HEK293T (cell line): ENCODE measurements at regions of chr10 and their contacts with region 1.

Region 1: DNA sequence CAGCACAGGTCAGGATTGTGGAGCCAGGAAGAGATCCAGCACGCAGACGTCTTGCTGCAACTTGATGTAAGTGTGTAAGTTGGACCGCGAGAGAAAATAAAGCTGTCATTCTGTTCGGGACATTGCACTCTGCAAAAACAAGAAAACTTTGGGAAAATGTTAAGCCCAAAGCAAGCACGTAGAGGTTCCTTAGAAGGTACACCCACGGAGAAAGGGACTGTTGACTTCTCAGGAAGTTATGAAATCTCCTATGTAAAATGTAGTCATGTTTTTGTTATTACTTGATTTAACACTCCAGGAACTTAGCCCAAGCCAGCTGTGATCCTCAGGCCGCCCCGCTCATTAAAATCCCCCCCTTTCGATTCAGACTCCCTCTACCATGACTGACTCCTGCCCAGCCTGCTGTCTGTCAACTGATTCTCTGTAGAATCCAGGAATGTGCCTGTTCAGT is 196.1 kb upstream of the TCF7L2 start:
- DNase-seq: no peak

Region 2: GRCh38 chr10:111944331-111944730 is 809.7 kb before region 1 on chr10:
- CTCF ChIA-PET with region 1: no interaction called
- POLR2A ChIA-PET with region 1: no interaction called
- DNase-seq: peak; percentile 18

Region 3: DNA sequence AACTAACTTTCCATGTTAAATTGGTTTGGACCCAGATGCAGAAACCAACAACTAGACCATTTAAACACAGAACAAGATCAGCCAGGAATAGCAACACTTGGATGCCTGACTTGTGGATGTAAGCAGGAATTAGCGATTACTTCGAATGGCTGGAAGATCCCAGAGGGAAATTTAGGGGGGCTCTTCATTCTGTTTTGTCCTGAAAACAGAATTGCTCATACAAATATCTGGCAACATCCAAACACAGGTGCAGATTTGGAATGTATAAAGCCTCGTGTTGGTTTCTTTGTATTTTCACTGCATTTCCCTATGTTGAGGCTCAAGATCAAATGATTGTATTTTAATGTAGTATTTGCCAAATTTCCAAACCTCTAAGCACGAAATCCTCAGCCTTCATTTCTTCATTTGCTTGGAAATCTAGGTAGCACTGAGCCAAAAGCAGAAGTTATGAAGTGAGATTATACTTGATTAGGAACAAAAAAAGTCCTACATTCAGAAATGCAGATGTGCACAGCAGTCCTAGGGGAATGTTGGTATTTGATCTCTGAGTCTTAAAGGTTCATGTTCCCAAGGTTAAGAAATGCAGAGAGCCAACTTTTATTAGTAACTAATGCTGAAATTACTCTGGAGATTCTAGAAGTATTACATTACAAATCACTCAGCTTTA is 52.6 kb before region 1 on chr10:
- CTCF ChIA-PET with region 1: no interaction called
- POLR2A ChIA-PET with region 1: no interaction called
- DNase-seq: no peak

Region 4: DNA sequence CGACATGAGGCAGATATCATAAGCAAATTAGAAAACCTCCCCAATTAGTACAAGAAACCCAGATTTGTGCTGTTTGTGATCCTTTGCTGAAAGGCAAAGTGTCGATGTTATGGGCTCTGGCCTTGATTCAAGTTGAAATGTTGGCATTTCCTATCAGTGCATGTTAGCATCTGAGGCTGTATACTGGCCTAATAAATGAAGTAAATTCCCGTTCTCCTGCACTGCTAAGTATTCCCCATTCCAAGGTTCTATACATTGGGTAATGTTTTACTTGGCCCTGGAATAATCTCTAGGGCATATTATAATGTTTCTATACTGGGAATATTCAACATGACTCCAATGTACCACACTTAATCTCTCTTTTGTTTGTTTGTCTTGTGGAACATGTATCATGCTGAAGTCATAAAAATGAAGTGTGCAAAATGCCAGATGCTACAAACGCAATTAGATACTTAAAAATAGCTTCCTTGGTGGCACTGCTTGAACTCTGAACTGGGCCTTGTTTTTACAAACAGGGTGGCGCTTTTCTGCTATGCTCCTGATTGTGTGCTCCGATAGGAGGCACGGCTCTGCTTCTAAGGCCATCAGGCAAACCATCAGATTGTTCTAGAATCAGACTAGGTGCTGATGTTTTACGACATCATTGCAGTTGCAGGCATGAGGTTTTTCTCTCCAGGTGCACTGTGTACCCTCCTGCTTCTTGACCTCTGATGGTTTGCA is 39.4 kb after region 1 on chr10:
- CTCF ChIA-PET with region 1: no interaction called
- POLR2A ChIA-PET with region 1: no interaction called
- DNase-seq: no peak

Region 5: GRCh38 chr10:112883360-112884178 is 129.6 kb after region 1 on chr10:
- CTCF ChIA-PET with region 1: no interaction called
- POLR2A ChIA-PET with region 1: no interaction called
- DNase-seq: no peak

Region 6: GRCh38 chr10:113169853-113170460 is 416.0 kb after region 1 on chr10:
- CTCF ChIA-PET with region 1: interaction called, 11 read pairs
- POLR2A ChIA-PET with region 1: no interaction called
- DNase-seq: no peak